Activated CD8-positive, alpha-beta memory T cell treated with anti-CD3 and anti-CD28 coated beads, Interleukin-2, amount 10 ng/mL, durations not matched to agents 7 days and 5 days (primary cell): ENCODE measurements at regions of chr14 and their contacts with region 1.

Region 1: DNA sequence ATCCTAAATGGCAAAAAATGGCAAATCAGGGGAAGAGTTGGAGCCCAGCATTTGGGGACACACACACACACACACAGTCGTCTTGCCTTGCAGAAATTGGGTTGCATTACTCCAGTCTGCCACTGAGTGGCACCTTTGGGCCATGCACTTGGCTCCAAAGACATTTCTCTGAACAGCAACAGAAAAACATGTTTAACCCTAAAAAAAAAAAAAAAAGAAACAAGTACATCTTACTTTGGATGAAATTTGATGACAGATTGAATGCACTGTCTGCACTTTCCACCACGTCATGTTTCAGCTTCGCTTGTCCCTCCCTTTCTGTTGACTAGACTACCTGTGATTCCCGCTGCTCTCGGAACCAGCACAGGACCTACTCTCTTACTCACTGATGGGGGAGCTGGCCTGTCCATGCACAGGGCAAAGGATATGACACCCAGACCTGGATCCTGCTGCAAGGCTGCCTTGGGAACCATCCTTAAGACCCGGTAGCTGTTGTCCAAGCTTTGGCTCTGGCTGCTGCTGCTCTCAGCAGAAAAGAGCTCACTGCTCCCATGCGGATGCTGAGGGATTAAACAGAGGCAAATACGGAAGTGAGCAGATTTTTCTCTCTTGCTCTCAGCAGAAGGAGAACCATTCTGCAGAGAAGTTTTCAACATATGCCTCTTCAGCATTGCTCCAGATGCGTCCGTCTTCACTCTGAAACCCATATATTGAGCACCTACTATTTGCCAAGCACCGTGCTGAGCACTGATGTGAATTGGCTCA is 376.8 kb downstream of the DPF3 start:
- DNase-seq: peak; percentile 90
- ATAC-seq: peak; percentile 35
- H3K4me3 Mint-ChIP-seq: no peak overlapping the region
- H3K27ac Mint-ChIP-seq: peak overlapping the region; percentile 64
- H3K4me1 Mint-ChIP-seq: peaks cover 79% of the 10 kb centered on the region
- H3K27me3 Mint-ChIP-seq: peaks cover 1% of the 10 kb centered on the region

Region 2: GRCh38 chr14:72495664-72496264 is 21.4 kb before region 1 on chr14:
- CTCF ChIA-PET with region 1: interaction called, 27 read pairs
- DNase-seq: no peak
- ATAC-seq: no peak
- H3K4me3 Mint-ChIP-seq: no peak overlapping the region
- H3K27ac Mint-ChIP-seq: no peak overlapping the region
- H3K4me1 Mint-ChIP-seq: peaks cover 2% of the 10 kb centered on the region
- H3K27me3 Mint-ChIP-seq: peaks cover 53% of the 10 kb centered on the region

Region 3: GRCh38 chr14:72532686-72533454 is 15.8 kb after region 1 on chr14:
- CTCF ChIA-PET with region 1: interaction called, 30 read pairs
- DNase-seq: no peak
- ATAC-seq: peak; percentile 43
- H3K4me3 Mint-ChIP-seq: no peak overlapping the region
- H3K27ac Mint-ChIP-seq: peak overlapping the region; percentile 81
- H3K4me1 Mint-ChIP-seq: peaks cover 85% of the 10 kb centered on the region
- H3K27me3 Mint-ChIP-seq: peaks cover 35% of the 10 kb centered on the region

Region 4: DNA sequence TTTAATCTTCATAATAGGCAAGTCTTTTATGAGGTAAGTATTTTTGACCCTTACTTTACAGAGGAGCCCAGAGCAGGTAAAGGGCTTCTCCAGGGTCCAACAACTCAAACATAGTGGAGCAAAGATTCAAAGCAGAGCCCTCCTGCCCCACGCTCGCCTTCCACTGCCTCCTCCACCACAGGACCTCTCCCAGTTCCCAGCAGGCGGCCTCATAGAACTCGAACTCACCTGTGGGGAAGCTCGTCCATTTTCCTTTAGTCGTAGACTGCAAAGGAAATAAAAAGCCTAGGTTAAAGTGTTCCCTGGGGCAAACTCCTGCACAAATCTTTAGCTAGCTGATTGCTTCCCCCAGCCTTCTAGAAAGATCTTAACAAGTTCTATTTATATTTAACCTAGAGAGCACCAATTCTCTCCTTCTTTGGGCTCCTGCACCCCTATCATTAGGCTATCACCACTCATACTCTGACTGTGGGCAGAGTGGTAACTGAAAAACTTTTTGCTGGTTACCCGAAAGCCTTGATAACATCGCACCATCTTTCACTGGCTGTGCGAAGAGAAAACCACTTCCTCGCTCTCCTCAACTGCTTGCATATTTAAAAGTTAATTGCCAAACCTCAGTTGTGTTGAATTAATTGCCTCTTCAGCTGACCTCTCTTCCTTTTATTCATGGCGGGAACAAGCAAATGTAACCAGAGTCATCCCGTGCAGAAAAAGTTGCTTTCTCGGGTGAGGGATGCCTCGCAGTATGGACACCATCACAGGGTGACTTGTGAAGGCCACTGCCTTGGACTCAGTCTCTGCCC is 77.2 kb after region 1 on chr14:
- CTCF ChIA-PET with region 1: interaction called, 22 read pairs
- DNase-seq: peak; percentile 88
- ATAC-seq: peak; percentile 91
- H3K4me3 Mint-ChIP-seq: peak overlapping the region; percentile 49
- H3K27ac Mint-ChIP-seq: peak overlapping the region; percentile 72
- H3K4me1 Mint-ChIP-seq: peaks cover 65% of the 10 kb centered on the region
- H3K27me3 Mint-ChIP-seq: peaks cover 62% of the 10 kb centered on the region

Region 5: DNA sequence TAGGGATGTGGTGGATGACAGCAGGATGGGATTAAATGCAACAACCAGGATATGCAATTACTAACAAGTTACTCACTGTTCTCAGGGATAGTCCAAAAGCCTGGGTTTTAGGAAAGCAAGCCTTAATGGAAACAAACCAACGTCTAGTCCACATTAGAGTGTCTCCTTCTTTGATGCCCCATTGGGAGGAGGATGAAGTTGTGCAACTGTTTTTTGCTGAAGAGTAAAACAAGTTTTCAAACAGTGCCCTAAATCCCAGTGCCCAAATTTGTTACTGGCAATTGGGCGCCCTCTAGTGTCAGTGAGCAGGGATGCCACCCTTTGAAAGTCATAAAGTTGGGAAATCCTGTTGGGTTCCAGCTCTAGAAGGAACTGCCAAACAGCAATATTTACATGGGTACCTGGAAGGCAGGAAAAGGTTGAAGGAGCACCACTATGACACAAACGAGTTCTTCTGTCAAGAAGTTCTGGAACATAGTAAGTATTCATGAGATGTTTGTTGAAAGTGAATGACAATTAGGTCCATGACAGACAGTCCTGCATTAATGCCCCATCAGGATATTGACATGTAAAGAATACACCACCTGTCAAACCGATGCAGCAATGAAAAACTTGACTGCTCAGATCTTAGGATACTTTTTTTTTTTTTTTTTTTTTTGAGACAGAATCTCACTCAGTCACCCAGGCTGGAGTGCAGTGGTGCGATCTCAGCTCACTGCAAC is 387.9 kb after region 1 on chr14:
- CTCF ChIA-PET with region 1: interaction called, 199 read pairs
- DNase-seq: peak; percentile 75
- ATAC-seq: peak; percentile 77
- H3K4me3 Mint-ChIP-seq: no peak overlapping the region
- H3K27ac Mint-ChIP-seq: no peak overlapping the region
- H3K4me1 Mint-ChIP-seq: peaks cover 17% of the 10 kb centered on the region
- H3K27me3 Mint-ChIP-seq: peaks cover 53% of the 10 kb centered on the region